ENCODE measurements at regions of chrX and their contacts with region 1.

Region 1: DNA sequence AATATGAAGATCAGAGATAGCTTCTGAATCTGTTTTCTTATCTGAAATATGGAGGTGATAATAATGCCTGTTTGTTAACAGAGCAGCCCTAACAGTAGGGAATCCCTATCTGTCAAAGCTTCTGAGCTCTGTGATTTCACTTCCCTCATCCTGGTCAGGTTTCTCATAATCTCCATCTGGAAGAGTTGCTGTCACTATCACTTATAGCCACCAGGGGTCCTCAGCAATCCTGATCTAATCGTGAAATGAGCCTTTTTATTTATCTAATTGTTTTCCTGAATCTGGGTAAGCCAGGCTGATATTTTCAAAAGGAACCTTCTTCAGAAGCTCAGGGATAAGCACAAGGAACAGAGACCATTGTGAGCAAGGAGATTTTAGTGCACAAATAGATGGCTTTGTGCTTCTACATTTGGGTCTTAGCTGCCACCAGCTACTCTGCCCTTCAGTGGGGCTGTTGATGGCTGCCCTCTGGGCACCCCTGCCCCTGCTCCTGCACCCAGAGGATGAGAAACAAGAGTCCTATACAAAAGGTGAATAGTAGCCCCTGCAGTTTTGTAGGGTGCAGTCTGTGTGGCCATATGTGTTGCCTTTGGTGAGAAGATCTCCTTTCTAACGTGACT is 196.4 kb upstream of the RADX start:
- DNase-seq: peak; percentile 8
- ATAC-seq: peak; percentile 68
- H3K4me3 ChIP-seq: no peak overlapping the region
- H3K27ac ChIP-seq: no peak overlapping the region
- H3K4me1 ChIP-seq: no peaks in the 10 kb centered on the region
- H3K27me3 ChIP-seq: no peaks in the 10 kb centered on the region
- CTCF ChIP-seq: peak; percentile 38 to 61 (median 52); a peak in 5 of 6 replicates
- POLR2A ChIP-seq: no peak
- RAD21 ChIP-seq: peak; percentile 49

Region 2: DNA sequence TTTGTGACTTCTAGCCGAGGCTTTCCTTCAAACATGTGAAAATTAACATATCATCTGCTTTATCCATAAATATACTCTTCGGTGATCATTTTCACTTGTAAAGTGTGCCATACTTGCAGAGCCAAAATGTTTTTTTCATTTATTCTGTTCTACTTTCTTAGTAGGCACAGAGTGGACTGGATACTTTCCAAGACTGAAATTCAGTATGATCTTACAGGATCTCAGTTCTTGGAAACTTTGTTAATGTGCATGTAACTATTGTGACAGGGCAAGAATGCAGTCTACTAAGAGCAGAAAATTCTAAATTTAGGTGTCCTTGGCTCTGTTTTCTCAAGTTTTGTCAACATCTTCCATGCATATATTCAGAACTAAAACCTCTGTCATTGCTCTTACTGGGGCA is 1479.8 kb before region 1 on chrX:
- CTCF ChIA-PET with region 1: no interaction called
- POLR2A ChIA-PET with region 1: no interaction called
- RAD21 ChIA-PET with region 1: no interaction called
- intact Hi-C with region 1: no loop called
- DNase-seq: no peak
- ATAC-seq: no peak
- H3K4me3 ChIP-seq: no peak overlapping the region
- H3K27ac ChIP-seq: no peak overlapping the region
- H3K4me1 ChIP-seq: no peaks in the 10 kb centered on the region
- H3K27me3 ChIP-seq: no peaks in the 10 kb centered on the region
- CTCF ChIP-seq: no peak
- POLR2A ChIP-seq: no peak
- RAD21 ChIP-seq: no peak

Region 3: DNA sequence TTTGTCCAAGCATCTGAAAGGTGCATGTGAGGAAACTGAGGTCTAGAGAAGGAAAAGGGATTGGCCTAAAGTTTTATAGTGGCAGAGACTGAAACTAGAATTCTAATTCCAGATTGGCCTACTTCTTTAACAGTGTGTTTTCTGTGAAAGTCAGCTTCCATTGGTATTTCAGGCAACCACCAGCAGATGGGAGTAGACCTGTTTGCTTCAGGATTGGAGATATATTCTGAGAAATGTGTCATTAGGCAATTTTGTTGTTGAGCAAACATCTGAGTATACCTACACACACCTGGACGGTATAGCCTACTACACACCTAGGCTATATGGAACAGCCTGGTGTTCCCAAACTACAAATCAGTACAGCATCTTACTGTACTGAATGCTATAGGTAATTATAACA is 10.9 kb before region 1 on chrX:
- CTCF ChIA-PET with region 1: interaction called, 11 read pairs
- POLR2A ChIA-PET with region 1: no interaction called
- RAD21 ChIA-PET with region 1: no interaction called
- intact Hi-C with region 1: no loop called
- DNase-seq: peak; percentile 13
- ATAC-seq: peak; percentile 53; the same call in 1 of the 2 replicates
- H3K4me3 ChIP-seq: no peak overlapping the region
- H3K27ac ChIP-seq: no peak overlapping the region
- H3K4me1 ChIP-seq: no peaks in the 10 kb centered on the region
- H3K27me3 ChIP-seq: no peaks in the 10 kb centered on the region
- CTCF ChIP-seq: peak; percentile 20 to 41 (median 35); a peak in 3 of 6 replicates
- POLR2A ChIP-seq: no peak
- RAD21 ChIP-seq: peak; percentile 44

Region 4: DNA sequence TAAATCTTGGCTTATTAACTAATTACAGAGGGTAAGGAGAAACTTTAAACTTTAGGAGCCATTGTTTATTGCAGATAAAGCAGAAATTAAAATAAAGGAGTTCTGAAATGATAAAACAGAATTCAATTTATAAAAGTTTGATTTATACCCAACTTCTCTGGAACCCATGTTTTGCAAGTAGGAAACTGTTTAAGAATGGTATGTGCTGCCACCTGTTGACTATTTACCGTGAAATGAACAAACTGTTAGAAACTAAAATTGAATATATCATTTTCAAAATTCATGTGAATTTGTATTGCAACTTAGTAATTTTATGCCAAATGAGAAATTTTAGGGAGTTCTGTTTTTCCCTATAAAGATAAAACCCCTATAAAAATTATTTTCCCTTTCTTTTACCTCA is 376.1 kb after region 1 on chrX:
- CTCF ChIA-PET with region 1: interaction called, 5 read pairs
- POLR2A ChIA-PET with region 1: no interaction called
- RAD21 ChIA-PET with region 1: no interaction called
- intact Hi-C with region 1: loop called (anchors 2 kb)
- DNase-seq: no peak
- ATAC-seq: no peak
- H3K4me3 ChIP-seq: no peak overlapping the region
- H3K27ac ChIP-seq: no peak overlapping the region
- H3K4me1 ChIP-seq: no peaks in the 10 kb centered on the region
- H3K27me3 ChIP-seq: no peaks in the 10 kb centered on the region
- CTCF ChIP-seq: peak; percentile 19 to 34 (median 33); a peak in 3 of 6 replicates
- POLR2A ChIP-seq: no peak
- RAD21 ChIP-seq: peak; percentile 50

Region 5: GRCh38 chrX:107171369-107172102 is 756.1 kb after region 1 on chrX:
- CTCF ChIA-PET with region 1: no interaction called
- POLR2A ChIA-PET with region 1: no interaction called
- RAD21 ChIA-PET with region 1: no interaction called
- intact Hi-C with region 1: no loop called
- DNase-seq: no peak
- ATAC-seq: no peak
- H3K4me3 ChIP-seq: no peak overlapping the region
- H3K27ac ChIP-seq: no peak overlapping the region
- H3K4me1 ChIP-seq: no peaks in the 10 kb centered on the region
- H3K27me3 ChIP-seq: no peaks in the 10 kb centered on the region
- CTCF ChIP-seq: no peak
- POLR2A ChIP-seq: no peak
- RAD21 ChIP-seq: no peak

Measured in HCT116 (cell line).